SK-N-SH (cell line): ENCODE measurements at regions of chr9 and their contacts with region 1.

Region 1: DNA sequence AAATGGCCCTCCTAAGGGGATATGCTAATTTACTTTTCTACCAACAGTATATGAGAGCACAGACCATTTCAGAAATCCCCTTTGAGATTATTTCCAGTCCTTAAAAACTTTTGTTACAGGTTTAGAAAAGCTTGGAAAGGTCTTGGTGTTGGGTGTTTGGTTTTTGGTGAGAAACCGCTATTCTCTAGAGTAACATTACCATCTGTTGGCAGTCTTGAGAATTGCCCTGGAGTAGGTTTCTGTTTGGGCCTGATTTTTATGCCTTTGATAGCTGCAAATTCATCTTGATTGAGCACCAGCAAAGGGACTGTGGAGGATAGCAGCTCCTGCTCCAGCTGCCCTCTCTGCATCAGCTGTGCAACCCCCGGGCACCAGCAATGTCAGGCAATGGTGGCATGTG is 8.0 kb downstream of the NUDT2 start:
- DNase-seq: no peak
- H3K4me3 ChIP-seq: no peak overlapping the region
- H3K27ac ChIP-seq: no peak overlapping the region
- H3K4me1 ChIP-seq: peaks cover 0 to 3% of the 10 kb centered on the region in 2 experiments; a peak in 1 of 4 replicates
- H3K27me3 ChIP-seq: no peaks in the 10 kb centered on the region
- CTCF ChIP-seq: no peak; the same call in 1 of the 2 replicates
- EP300 ChIP-seq: no peak
- RAD21 ChIP-seq: peak; percentile 45

Region 2: GRCh38 chr9:34376596-34377403 is 39.4 kb after region 1 on chr9 and contains the start of gene MYORG:
- CTCF ChIA-PET with region 1: interaction called, 149 read pairs
- POLR2A ChIA-PET with region 1: no interaction called
- DNase-seq: peak; percentile 98
- H3K4me3 ChIP-seq: peak within 1 kb of the TSS; percentile 83 to 84
- H3K27ac ChIP-seq: peak within 1 kb of the TSS in 1 of 2 experiments; percentile 76; a peak in 2 of 4 replicates
- H3K4me1 ChIP-seq: peaks cover 7 to 40% of the 10 kb centered on the region in 2 experiments; a peak in 3 of 4 replicates
- H3K27me3 ChIP-seq: no peaks in the 10 kb centered on the region
- CTCF ChIP-seq: no peak
- EP300 ChIP-seq: no peak
- RAD21 ChIP-seq: no peak
- polyA plus RNA-seq, gene MYORG: 0.97 and 1.1 TPM in 2 replicates

Region 3: DNA sequence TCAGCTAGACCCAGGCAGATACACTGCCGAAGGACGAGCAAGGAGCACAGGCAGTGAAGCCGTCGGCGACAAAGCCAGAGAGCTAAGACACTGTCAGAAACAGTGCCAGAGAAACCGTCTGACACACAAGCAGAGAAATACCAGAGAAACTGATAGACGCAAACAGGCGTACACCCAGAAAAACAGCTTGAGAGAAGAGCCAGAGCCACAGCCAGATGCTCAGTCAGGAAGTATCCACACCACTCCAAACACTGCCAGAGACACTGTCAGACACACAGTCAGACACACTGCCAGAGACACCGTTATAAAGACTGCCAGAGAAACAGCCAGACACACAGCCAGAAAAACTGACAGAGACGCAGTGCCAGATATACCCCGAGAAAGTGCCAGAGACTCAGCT is 233.0 kb after region 1 on chr9:
- CTCF ChIA-PET with region 1: no interaction called
- POLR2A ChIA-PET with region 1: no interaction called
- DNase-seq: peak; percentile 78
- H3K4me3 ChIP-seq: no peak overlapping the region
- H3K27ac ChIP-seq: peak overlapping the region in 1 of 2 experiments; percentile 94; a peak in 2 of 4 replicates
- H3K4me1 ChIP-seq: peaks cover 0 to 98% of the 10 kb centered on the region in 2 experiments; a peak in 2 of 4 replicates
- H3K27me3 ChIP-seq: no peaks in the 10 kb centered on the region; the same call in 1 of the 2 replicates
- CTCF ChIP-seq: no peak
- EP300 ChIP-seq: no peak; a peak in 1 of 4 replicates
- RAD21 ChIP-seq: no peak